GM12878 (cell line): ENCODE measurements at regions of chr6 and their contacts with region 1.

Region 1: GRCh38 chr6:155327326-155328073 is 13.2 kb upstream of the TFB1M start:
- DNase-seq: no peak
- ATAC-seq: peak; percentile 85
- H3K4me3 ChIP-seq: no peak overlapping the region
- H3K27ac ChIP-seq: no peak overlapping the region
- H3K4me1 ChIP-seq: no peaks in the 10 kb centered on the region; the same call in 1 of the 2 replicates
- H3K27me3 ChIP-seq: no peaks in the 10 kb centered on the region
- CTCF ChIP-seq: peak; percentile 64 to 84 (median 71)
- EP300 ChIP-seq: no peak
- POLR2A ChIP-seq: no peak
- RAD21 ChIP-seq: peak; percentile 98

Region 2: DNA sequence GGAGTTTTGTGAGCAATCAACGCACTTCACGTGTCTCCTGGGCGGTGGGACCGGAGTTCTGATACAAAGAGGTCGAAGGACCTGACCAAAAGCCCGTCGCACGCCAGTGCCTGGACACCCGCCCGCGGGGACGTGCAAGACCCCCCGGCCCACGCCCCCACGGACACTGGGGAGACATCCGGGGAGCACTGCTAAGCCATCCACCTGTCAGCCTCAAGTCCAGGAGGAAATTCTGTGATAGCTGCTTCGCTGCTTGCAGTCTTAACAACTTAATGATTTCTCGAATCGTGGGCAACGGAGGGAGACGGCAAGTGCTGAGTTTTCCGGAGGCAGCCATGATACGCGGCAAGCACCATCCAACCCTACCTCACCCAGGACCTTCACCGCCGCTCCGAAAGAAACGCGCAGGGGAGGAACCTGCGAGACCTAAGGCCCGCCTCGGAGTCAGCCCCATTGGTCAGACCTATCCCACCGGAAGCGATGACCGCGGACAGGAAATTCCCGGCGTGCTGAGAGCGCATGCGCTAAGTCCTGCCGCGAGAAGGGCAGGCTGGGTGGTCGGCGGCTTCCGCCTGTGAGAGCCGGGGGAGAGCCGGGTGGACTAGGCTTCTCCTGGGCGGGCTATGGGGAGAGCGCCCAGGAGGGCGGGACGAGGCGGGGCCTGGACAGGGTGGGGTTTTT is 13.3 kb before region 1 on chr6 and contains the start of gene TFB1M:
- CTCF ChIA-PET with region 1: interaction called, 40 read pairs
- POLR2A ChIA-PET with region 1: interaction called, 4 read pairs
- RAD21 ChIA-PET with region 1: interaction called, 25 read pairs
- SMC1A ChIA-PET with region 1: interaction called, 66 read pairs
- in situ Hi-C with region 1: no loop called
- intact Hi-C with region 1: no loop called
- DNase-seq: peak; percentile 99
- ATAC-seq: peak; percentile 96
- H3K4me3 ChIP-seq: peak within 1 kb of the TSS; percentile 88
- H3K27ac ChIP-seq: peak within 1 kb of the TSS; percentile 95
- H3K4me1 ChIP-seq: no peaks in the 10 kb centered on the region
- H3K27me3 ChIP-seq: no peaks in the 10 kb centered on the region
- CTCF ChIP-seq: no peak
- EP300 ChIP-seq: 0 out of 4 replicates have a peak, but pooled peaks of 1 of the 2 experiments have one; percentile 30
- POLR2A ChIP-seq: peak; percentile 97
- RAD21 ChIP-seq: no peak
- polyA plus RNA-seq, gene TFB1M: 95.8 to 117 TPM

Region 3: GRCh38 chr6:155418017-155418761 is 90.7 kb after region 1 on chr6:
- CTCF ChIA-PET with region 1: interaction called, 3 read pairs
- POLR2A ChIA-PET with region 1: no interaction called
- RAD21 ChIA-PET with region 1: interaction called, 3 read pairs
- SMC1A ChIA-PET with region 1: interaction called, 6 read pairs
- in situ Hi-C with region 1: no loop called
- intact Hi-C with region 1: loop called (anchors 5 kb)
- DNase-seq: peak; percentile 68
- ATAC-seq: peak; percentile 85
- H3K4me3 ChIP-seq: peak overlapping the region; percentile 37
- H3K27ac ChIP-seq: peak overlapping the region; percentile 79
- H3K4me1 ChIP-seq: peaks cover 29% of the 10 kb centered on the region
- H3K27me3 ChIP-seq: no peaks in the 10 kb centered on the region
- CTCF ChIP-seq: no peak
- EP300 ChIP-seq: no peak; a peak in 1 of 4 replicates
- POLR2A ChIP-seq: no peak
- RAD21 ChIP-seq: no peak

Region 4: DNA sequence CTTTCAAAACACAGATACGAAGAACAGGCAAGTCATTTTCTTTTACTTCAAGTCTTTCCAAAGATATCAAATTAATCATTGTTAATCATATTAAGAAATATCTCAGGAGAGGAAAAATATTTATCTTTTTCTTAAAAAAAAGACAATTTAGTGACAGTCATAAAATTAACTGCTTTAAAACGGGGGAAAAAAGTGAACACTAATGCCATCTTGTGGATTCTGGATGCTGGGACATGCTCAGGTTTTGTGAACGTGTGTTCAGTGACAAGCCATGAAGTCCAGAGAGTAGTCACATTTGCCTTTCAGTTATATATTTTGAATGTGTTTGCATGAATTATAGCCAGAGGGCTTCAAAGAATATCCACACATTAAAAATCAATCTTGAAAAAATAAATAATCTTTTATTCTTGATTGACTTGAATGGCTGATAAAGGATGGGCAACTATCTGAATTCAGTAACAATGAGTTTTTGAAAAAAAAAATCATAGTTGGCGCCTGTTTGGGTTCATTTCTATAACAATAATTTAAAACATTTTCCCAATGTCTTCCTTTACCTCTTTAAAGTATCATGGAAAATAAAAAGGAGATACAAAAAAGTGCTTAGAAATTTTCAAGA is 202.8 kb after region 1 on chr6:
- CTCF ChIA-PET with region 1: interaction called, 51 read pairs
- POLR2A ChIA-PET with region 1: no interaction called
- RAD21 ChIA-PET with region 1: interaction called, 24 read pairs
- SMC1A ChIA-PET with region 1: interaction called, 35 read pairs
- in situ Hi-C with region 1: loop called (anchors 5 kb)
- intact Hi-C with region 1: loop called (anchors 1 kb)
- DNase-seq: no peak
- ATAC-seq: peak; percentile 89
- H3K4me3 ChIP-seq: no peak overlapping the region
- H3K27ac ChIP-seq: no peak overlapping the region
- H3K4me1 ChIP-seq: no peaks in the 10 kb centered on the region
- H3K27me3 ChIP-seq: no peaks in the 10 kb centered on the region
- CTCF ChIP-seq: peak; percentile 66 to 76 (median 76); a peak in 5 of 6 replicates
- EP300 ChIP-seq: no peak
- POLR2A ChIP-seq: no peak
- RAD21 ChIP-seq: peak; percentile 89

Region 5: GRCh38 chr6:155765275-155766194 is 438.0 kb after region 1 on chr6:
- CTCF ChIA-PET with region 1: no interaction called
- POLR2A ChIA-PET with region 1: no interaction called
- RAD21 ChIA-PET with region 1: no interaction called
- SMC1A ChIA-PET with region 1: interaction called, 3 read pairs
- in situ Hi-C with region 1: no loop called
- intact Hi-C with region 1: loop called (anchors 10 kb)
- DNase-seq: no peak
- ATAC-seq: no peak
- H3K4me3 ChIP-seq: no peak overlapping the region
- H3K27ac ChIP-seq: no peak overlapping the region
- H3K4me1 ChIP-seq: no peaks in the 10 kb centered on the region
- H3K27me3 ChIP-seq: no peaks in the 10 kb centered on the region; a peak in 1 of 4 replicates
- CTCF ChIP-seq: no peak
- EP300 ChIP-seq: no peak
- POLR2A ChIP-seq: no peak
- RAD21 ChIP-seq: no peak

Region 6: DNA sequence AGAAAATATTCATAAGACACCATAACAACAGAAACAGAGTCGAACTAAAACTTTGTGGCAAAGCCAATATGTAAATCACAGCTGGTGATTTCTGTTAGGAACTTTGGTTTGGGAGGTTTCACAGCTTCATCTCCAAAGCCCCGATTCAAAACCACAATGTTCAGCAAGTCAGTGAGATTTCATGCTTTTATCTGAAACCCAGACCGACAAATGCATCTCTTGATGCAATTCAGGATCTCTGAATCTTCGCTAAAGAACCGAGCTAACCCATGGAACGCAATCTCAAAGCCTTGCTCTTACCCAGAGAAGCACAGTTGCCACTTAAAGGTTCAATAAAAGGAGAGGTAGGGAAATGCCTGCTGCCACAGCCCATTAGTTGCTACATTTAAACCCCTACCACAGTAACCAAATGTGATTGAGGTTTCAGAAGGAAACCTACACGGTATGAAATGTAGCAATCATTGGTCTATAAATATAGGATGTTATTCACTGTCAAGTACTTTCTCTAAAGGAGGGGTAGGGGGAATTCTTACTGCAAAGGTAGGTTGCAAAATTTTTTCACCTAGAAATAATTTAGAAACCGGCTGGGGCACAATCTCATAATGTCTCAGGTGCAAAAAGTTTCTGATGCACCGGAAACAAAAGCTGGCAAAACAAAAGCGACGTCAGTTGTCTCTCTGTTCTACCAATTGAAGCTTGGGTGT is 1068.7 kb after region 1 on chr6:
- CTCF ChIA-PET with region 1: no interaction called
- POLR2A ChIA-PET with region 1: no interaction called
- RAD21 ChIA-PET with region 1: no interaction called
- SMC1A ChIA-PET with region 1: no interaction called
- in situ Hi-C with region 1: no loop called
- intact Hi-C with region 1: loop called (anchors 10 kb)
- DNase-seq: peak; percentile 63
- ATAC-seq: peak; percentile 76
- H3K4me3 ChIP-seq: peak overlapping the region; percentile 46; the same call in 1 of the 2 replicates
- H3K27ac ChIP-seq: peak overlapping the region; percentile 68; the same call in 1 of the 2 replicates
- H3K4me1 ChIP-seq: peaks cover 27% of the 10 kb centered on the region
- H3K27me3 ChIP-seq: peaks cover 0 to 26% of the 10 kb centered on the region in 2 experiments; a peak in 2 of 4 replicates
- CTCF ChIP-seq: no peak
- EP300 ChIP-seq: no peak
- POLR2A ChIP-seq: no peak
- RAD21 ChIP-seq: no peak

Region 7: GRCh38 chr6:157274471-157275226 is 1947.1 kb after region 1 on chr6:
- CTCF ChIA-PET with region 1: no interaction called
- POLR2A ChIA-PET with region 1: no interaction called
- RAD21 ChIA-PET with region 1: no interaction called
- SMC1A ChIA-PET with region 1: no interaction called
- in situ Hi-C with region 1: no loop called
- intact Hi-C with region 1: loop called (anchors 5 kb)
- DNase-seq: peak; percentile 9
- ATAC-seq: peak; percentile 97
- H3K4me3 ChIP-seq: peak overlapping the region; percentile 79
- H3K27ac ChIP-seq: no peak overlapping the region
- H3K4me1 ChIP-seq: no peaks in the 10 kb centered on the region
- H3K27me3 ChIP-seq: no peaks in the 10 kb centered on the region; a peak in 1 of 4 replicates
- CTCF ChIP-seq: peak; percentile 59 to 82 (median 65); a peak in 4 of 6 replicates
- EP300 ChIP-seq: no peak
- POLR2A ChIP-seq: peak; percentile 35; the same call in 1 of the 2 replicates
- RAD21 ChIP-seq: peak; percentile 85